Activated CD4-positive, alpha-beta T cell treated with anti-CD3 and anti-CD28 coated beads, Interleukin-2, amount 10 ng/mL, durations not matched to agents 7 days and 5 days (primary cell): ENCODE measurements at regions of chr2 and their contacts with region 1.

Region 1: DNA sequence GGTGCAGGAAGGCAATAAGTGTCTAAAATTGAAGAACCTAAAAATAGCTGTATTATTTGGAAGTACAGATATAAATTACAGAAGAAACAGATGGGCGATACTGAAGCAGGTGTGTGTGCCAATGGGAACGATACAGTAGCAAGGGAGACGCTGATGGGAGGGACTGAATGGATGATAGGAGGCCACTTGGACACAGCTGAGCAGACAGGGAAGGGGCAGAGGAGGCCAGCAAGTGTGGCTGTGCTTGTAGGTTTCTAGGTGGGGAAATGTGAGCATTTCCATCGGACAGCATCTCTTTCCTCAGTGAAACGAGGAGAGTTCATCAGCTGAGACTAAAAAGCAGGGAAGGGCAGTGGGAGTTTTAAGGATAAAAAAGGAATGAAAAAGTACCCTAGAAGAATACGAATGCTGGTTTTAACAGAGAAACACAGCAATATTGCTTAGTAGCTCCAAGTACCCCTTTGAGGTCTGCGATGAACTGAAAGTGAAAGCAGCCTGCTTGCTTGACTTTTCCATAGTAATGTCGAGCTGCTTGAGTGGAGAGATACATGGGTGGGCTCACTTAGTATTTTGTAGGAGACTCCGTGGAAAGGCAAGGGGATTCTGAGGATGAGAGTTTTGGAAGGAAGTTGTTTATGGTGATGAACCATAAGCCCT is 91.7 kb upstream of the EPC2 start:
- DNase-seq: peak; percentile 70
- H3K4me3 Mint-ChIP-seq: no peak overlapping the region
- H3K27ac Mint-ChIP-seq: no peak overlapping the region
- H3K4me1 Mint-ChIP-seq: peaks cover 2% of the 10 kb centered on the region
- H3K27me3 Mint-ChIP-seq: no peaks in the 10 kb centered on the region

Region 2: DNA sequence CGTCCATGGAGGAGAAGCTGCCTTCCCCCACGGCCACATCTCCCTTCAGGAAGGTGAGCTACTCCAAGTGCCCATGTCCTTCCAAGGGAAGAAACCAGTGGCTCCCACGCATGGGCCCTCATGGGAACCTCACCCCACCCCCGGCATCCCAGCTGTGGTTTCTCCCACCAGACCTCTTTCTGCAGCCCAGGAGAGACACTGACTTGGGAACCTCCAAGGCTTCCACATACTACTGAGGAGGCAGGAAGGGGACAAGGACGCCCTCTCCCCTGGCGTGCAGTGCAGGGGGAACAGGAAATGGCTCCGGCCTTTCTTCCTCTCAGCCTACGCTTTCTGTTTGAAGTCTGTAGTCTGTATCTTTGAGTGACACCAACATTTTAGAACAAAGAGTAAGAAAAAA is 12.8 kb before region 1 on chr2:
- CTCF ChIA-PET with region 1: interaction called, 28 read pairs
- POLR2A ChIA-PET with region 1: no interaction called
- DNase-seq: peak; percentile 50
- H3K4me3 Mint-ChIP-seq: no peak overlapping the region
- H3K27ac Mint-ChIP-seq: peak overlapping the region; percentile 90
- H3K4me1 Mint-ChIP-seq: peaks cover 34% of the 10 kb centered on the region
- H3K27me3 Mint-ChIP-seq: no peaks in the 10 kb centered on the region